ENCODE measurements at regions of chr13 and their contacts with region 1.

Region 1: GRCh38 chr13:42969558-42970172 is 22.4 kb downstream of the EPSTI1 start:
- DNase-seq: peak; percentile 84
- H3K4me3 ChIP-seq: no peak overlapping the region
- H3K27ac ChIP-seq: no peak overlapping the region
- H3K4me1 ChIP-seq: peaks cover 0 to 2% of the 10 kb centered on the region in 2 experiments; a peak in 1 of 4 replicates
- H3K27me3 ChIP-seq: no peaks in the 10 kb centered on the region
- CTCF ChIP-seq: peak; percentile 88
- EP300 ChIP-seq: no peak
- RAD21 ChIP-seq: peak; percentile 75

Region 2: GRCh38 chr13:42950181-42950580 is 19.5 kb before region 1 on chr13:
- CTCF ChIA-PET with region 1: interaction called, 17 read pairs
- POLR2A ChIA-PET with region 1: no interaction called
- DNase-seq: no peak
- H3K4me3 ChIP-seq: no peak overlapping the region
- H3K27ac ChIP-seq: no peak overlapping the region
- H3K4me1 ChIP-seq: no peaks in the 10 kb centered on the region
- H3K27me3 ChIP-seq: no peaks in the 10 kb centered on the region
- CTCF ChIP-seq: no peak
- EP300 ChIP-seq: no peak
- RAD21 ChIP-seq: no peak

Region 3: DNA sequence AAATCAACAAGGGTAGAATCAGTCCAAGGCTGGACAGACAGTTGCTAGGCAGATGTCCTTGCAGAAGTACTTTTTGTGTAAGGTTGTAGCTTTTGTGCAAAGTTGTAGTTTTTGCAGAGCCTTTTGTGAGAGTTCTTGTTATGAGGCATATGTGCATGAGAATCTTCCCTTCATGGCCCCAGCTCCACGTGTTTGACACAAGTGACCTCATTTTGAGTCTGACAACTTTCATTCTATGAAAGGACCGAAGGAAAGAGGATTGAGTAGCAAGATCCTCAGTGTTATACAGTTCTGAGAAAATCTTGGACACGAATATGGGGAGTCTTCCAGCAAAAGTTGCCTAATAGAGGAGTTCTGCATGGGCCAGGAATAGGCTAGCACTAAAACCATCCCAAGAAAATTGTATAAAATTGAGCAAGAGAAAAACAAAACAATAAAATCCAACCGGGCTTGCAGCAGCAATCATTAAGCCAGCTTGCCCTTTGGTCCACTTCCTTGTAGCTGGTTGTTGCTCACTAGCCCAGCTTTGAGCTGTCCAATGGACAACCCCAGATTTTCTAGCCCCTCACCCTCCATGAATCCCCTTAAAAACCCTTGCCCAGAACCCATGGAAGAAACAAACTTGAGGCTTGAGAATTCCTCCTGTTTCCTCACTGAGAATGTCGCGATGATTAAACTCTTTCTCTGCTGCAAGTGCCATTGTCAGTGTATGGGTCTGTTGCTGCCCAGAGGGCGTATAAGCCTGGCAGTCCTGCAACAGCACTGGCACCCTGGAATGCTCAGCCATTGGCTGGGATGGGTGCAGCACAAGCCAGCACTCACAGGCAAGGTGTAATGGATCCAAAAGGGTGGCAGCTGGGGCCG is 15.9 kb after region 1 on chr13:
- CTCF ChIA-PET with region 1: interaction called, 10 read pairs
- POLR2A ChIA-PET with region 1: no interaction called
- DNase-seq: peak; percentile 53
- H3K4me3 ChIP-seq: no peak overlapping the region
- H3K27ac ChIP-seq: no peak overlapping the region
- H3K4me1 ChIP-seq: peaks cover 0 to 5% of the 10 kb centered on the region in 2 experiments; a peak in 1 of 4 replicates
- H3K27me3 ChIP-seq: no peaks in the 10 kb centered on the region
- CTCF ChIP-seq: no peak
- EP300 ChIP-seq: no peak
- RAD21 ChIP-seq: no peak

Region 4: DNA sequence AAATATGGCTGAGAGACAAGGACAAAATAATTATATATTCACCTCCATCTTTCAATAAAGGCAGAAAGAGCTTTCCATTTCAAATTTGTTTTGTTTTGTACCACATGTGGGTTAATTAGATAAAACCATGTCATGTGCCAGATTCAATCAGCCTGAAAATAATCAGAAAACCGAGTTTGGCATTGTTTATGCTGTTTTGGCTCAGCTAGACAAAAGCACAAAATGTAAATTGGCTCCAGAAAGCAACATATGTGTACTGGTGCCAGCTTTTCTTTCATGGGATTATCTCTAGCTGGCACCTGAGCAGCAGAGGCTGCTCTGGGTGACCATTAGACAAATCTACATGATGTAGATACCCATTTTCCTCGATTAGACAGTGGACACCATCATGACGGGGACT is 44.5 kb after region 1 on chr13:
- CTCF ChIA-PET with region 1: interaction called, 12 read pairs
- POLR2A ChIA-PET with region 1: no interaction called
- DNase-seq: peak; percentile 47
- H3K4me3 ChIP-seq: no peak overlapping the region
- H3K27ac ChIP-seq: peak overlapping the region in 1 of 2 experiments; percentile 85; a peak in 2 of 4 replicates
- H3K4me1 ChIP-seq: peaks cover 0 to 14% of the 10 kb centered on the region in 2 experiments; a peak in 2 of 4 replicates
- H3K27me3 ChIP-seq: no peaks in the 10 kb centered on the region
- CTCF ChIP-seq: no peak
- EP300 ChIP-seq: peak in 1 of 2 experiments; percentile 94; a peak in 2 of 4 replicates
- RAD21 ChIP-seq: peak; percentile 10; the same call in 1 of the 2 replicates

Region 5: GRCh38 chr13:43085545-43085944 is 115.9 kb after region 1 on chr13:
- CTCF ChIA-PET with region 1: interaction called, 10 read pairs
- POLR2A ChIA-PET with region 1: no interaction called
- DNase-seq: peak; percentile 17
- H3K4me3 ChIP-seq: no peak overlapping the region
- H3K27ac ChIP-seq: no peak overlapping the region
- H3K4me1 ChIP-seq: no peaks in the 10 kb centered on the region; a peak in 1 of 4 replicates
- H3K27me3 ChIP-seq: no peaks in the 10 kb centered on the region
- CTCF ChIP-seq: peak; percentile 79
- EP300 ChIP-seq: no peak
- RAD21 ChIP-seq: peak; percentile 69

Region 6: DNA sequence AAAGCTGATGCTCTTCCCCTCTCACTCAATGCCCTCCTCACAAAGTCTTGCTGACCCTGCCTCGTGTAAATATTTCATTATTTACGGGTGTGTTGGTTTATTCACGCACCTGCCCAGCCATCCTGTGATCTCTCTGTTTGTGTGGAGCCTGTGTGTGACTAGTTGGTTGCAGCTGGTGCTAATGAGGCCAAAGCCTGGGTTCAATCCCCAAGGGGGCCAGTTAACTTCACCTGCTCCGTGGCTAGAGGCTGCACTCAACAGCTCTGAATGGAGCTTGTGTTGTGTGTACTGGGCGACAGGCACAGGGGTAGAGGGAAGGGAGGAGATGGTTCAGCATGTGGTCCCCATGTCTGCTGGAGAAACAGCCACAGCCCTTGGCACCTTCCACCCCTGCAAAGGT is 163.2 kb after region 1 on chr13:
- CTCF ChIA-PET with region 1: interaction called, 10 read pairs
- POLR2A ChIA-PET with region 1: no interaction called
- DNase-seq: no peak
- H3K4me3 ChIP-seq: no peak overlapping the region
- H3K27ac ChIP-seq: no peak overlapping the region
- H3K4me1 ChIP-seq: peaks cover 0 to 12% of the 10 kb centered on the region in 2 experiments; a peak in 2 of 4 replicates
- H3K27me3 ChIP-seq: no peaks in the 10 kb centered on the region
- CTCF ChIP-seq: no peak
- EP300 ChIP-seq: no peak
- RAD21 ChIP-seq: no peak

Region 7: GRCh38 chr13:43804461-43805070 is 834.9 kb after region 1 on chr13:
- CTCF ChIA-PET with region 1: interaction called, 16 read pairs
- POLR2A ChIA-PET with region 1: no interaction called
- DNase-seq: peak; percentile 66
- H3K4me3 ChIP-seq: peak overlapping the region; percentile 27 to 57; a peak in 3 of 4 replicates
- H3K27ac ChIP-seq: peak overlapping the region; percentile 68 to 85
- H3K4me1 ChIP-seq: peaks cover 4 to 7% of the 10 kb centered on the region in 2 experiments; a peak in 3 of 4 replicates
- H3K27me3 ChIP-seq: no peaks in the 10 kb centered on the region
- CTCF ChIP-seq: peak; percentile 76
- EP300 ChIP-seq: no peak; a peak in 1 of 4 replicates
- RAD21 ChIP-seq: peak; percentile 86